PC-3 (cell line): ENCODE measurements at regions of chr3 and their contacts with region 1.

Region 1: GRCh38 chr3:43621656-43622432 is at the start of gene ANO10:
- DNase-seq: peak; percentile 99
- ATAC-seq: peak; percentile 95
- H3K4me3 ChIP-seq: peak within 1 kb of the TSS; percentile 98
- H3K27ac ChIP-seq: peak within 1 kb of the TSS; percentile 54
- H3K4me1 ChIP-seq: peaks cover 14% of the 10 kb centered on the region
- H3K27me3 ChIP-seq: no peaks in the 10 kb centered on the region
- CTCF ChIP-seq: no peak
- total RNA-seq, gene ANO10: 23.7 and 28.3 TPM in 2 replicates

Region 2: DNA sequence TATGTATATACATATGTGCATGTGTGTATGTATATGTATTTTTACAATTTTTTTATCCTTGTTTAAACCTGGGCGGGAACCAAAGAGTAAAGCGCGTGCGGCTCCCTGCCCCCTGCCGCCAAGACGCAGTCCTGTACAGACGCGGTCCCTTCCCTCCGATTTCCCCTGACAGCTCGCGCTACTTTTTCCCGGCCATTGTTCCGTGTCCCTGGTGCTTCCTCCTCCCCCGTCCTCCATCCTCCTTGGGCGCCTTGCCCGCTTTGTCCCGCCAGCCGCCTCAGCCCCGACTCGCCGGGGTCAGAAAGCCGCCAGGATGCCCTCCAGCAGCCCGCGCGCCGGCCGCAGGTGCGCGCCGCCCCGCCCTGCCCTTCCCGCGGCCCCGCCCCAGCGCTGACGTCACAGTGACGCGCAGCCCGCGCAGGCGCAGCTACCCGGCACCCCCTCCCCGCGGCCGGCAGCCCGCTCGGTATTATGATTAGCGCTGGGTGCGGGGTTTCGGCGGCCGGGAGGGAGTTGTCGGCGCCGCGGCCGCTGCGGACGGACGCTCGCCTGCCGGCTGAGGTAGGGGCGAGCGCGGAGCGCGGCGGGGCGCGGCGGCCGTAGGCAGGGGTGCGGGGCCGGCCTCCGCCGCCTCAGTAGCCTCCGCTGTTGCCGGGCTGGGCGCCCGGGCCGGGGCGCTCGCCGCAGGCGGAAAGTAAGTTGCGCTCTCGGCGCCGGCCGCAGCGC is 335.6 kb before region 1 on chr3 and contains the start of gene SNRK:
- CTCF ChIA-PET with region 1: no interaction called
- POLR2A ChIA-PET with region 1: no interaction called
- intact Hi-C with region 1: loop called (anchors 5 kb)
- DNase-seq: peak; percentile 89
- ATAC-seq: peak; percentile 69
- H3K4me3 ChIP-seq: peak within 1 kb of the TSS; percentile 85
- H3K27ac ChIP-seq: peak within 1 kb of the TSS; percentile 60
- H3K4me1 ChIP-seq: peaks cover 36% of the 10 kb centered on the region
- H3K27me3 ChIP-seq: no peaks in the 10 kb centered on the region
- CTCF ChIP-seq: no peak; the same call in 1 of the 2 replicates
- total RNA-seq, gene SNRK: 53.3 and 53.4 TPM in 2 replicates

Region 3: GRCh38 chr3:43296565-43296964 is 325.3 kb before region 1 on chr3:
- CTCF ChIA-PET with region 1: no interaction called
- POLR2A ChIA-PET with region 1: interaction called, 35 read pairs
- intact Hi-C with region 1: no loop called
- DNase-seq: peak; percentile 28
- ATAC-seq: no peak; the same call in 1 of the 2 replicates
- H3K4me3 ChIP-seq: no peak overlapping the region
- H3K27ac ChIP-seq: no peak overlapping the region
- H3K4me1 ChIP-seq: peaks cover 10% of the 10 kb centered on the region
- H3K27me3 ChIP-seq: no peaks in the 10 kb centered on the region
- CTCF ChIP-seq: no peak

Region 4: GRCh38 chr3:43559963-43560362 is 61.9 kb before region 1 on chr3:
- CTCF ChIA-PET with region 1: no interaction called
- POLR2A ChIA-PET with region 1: no interaction called
- intact Hi-C with region 1: loop called (anchors 2 kb)
- DNase-seq: peak; percentile 52
- ATAC-seq: peak; percentile 98
- H3K4me3 ChIP-seq: no peak overlapping the region
- H3K27ac ChIP-seq: peak overlapping the region; percentile 34
- H3K4me1 ChIP-seq: peaks cover 15% of the 10 kb centered on the region
- H3K27me3 ChIP-seq: no peaks in the 10 kb centered on the region
- CTCF ChIP-seq: peak; percentile 51

Region 5: GRCh38 chr3:43632269-43632733 is 10.5 kb after region 1 on chr3:
- CTCF ChIA-PET with region 1: interaction called, 5 read pairs
- POLR2A ChIA-PET with region 1: interaction called, 4 read pairs
- intact Hi-C with region 1: loop called (anchors 1 kb)
- DNase-seq: peak; percentile 98
- ATAC-seq: peak; percentile 99
- H3K4me3 ChIP-seq: no peak overlapping the region
- H3K27ac ChIP-seq: peak overlapping the region; percentile 88
- H3K4me1 ChIP-seq: peaks cover 24% of the 10 kb centered on the region
- H3K27me3 ChIP-seq: no peaks in the 10 kb centered on the region
- CTCF ChIP-seq: no peak

Region 6: GRCh38 chr3:44036850-44037249 is 415.0 kb after region 1 on chr3:
- CTCF ChIA-PET with region 1: no interaction called
- POLR2A ChIA-PET with region 1: no interaction called
- intact Hi-C with region 1: no loop called
- DNase-seq: no peak
- ATAC-seq: no peak
- H3K4me3 ChIP-seq: no peak overlapping the region
- H3K27ac ChIP-seq: no peak overlapping the region
- H3K4me1 ChIP-seq: no peaks in the 10 kb centered on the region
- H3K27me3 ChIP-seq: no peaks in the 10 kb centered on the region
- CTCF ChIP-seq: no peak